CD8-positive, alpha-beta memory T cell (primary cell): ENCODE measurements at regions of chr10 and their contacts with region 1.

Region 1: DNA sequence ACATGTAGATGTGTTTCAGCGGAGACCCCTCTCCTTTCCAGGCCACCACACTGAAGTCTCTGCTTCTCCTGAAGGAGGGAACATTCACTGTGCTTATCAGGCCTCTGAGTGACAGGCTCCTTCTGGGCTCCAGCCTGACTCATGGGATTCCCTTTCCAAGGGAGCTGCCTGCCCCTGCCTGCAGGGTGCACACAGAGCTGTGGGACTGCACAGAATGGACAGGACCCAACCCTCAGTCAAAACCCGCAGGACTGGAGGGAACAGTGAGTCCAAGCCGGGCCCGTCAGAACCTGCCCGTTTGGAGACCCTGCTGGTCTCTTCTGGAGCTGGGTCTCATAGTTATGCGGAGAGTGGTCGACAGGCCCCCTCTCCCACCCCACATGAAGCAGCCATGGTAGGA is 32.6 kb downstream of the PLAC9 start:
- DNase-seq: peak in 1 of 5 donors; percentile 11
- H3K4me3 ChIP-seq: no peak overlapping the region
- H3K4me3 Mint-ChIP-seq: no peak overlapping the region
- H3K27ac ChIP-seq: no peak overlapping the region
- H3K27ac Mint-ChIP-seq: no peak overlapping the region
- H3K4me1 ChIP-seq: no peaks in the 10 kb centered on the region
- H3K4me1 Mint-ChIP-seq: peaks cover 9 to 11% (median 11%) of the 10 kb centered on the region in 3 donors
- H3K27me3 ChIP-seq: no peaks in the 10 kb centered on the region
- H3K27me3 Mint-ChIP-seq: no peaks in the 10 kb centered on the region

Region 2: GRCh38 chr10:80154975-80155695 is 10.0 kb before region 1 on chr10:
- CTCF ChIA-PET with region 1: interaction called, 10 read pairs
- POLR2A ChIA-PET with region 1: no interaction called
- DNase-seq: no peak
- H3K4me3 ChIP-seq: no peak overlapping the region
- H3K4me3 Mint-ChIP-seq: no peak overlapping the region
- H3K27ac ChIP-seq: no peak overlapping the region
- H3K27ac Mint-ChIP-seq: peak overlapping the region in 4 of 8 donors; percentile 10 to 87 (median 27)
- H3K4me1 ChIP-seq: no peaks in the 10 kb centered on the region
- H3K4me1 Mint-ChIP-seq: no peaks in the 10 kb centered on the region
- H3K27me3 ChIP-seq: no peaks in the 10 kb centered on the region
- H3K27me3 Mint-ChIP-seq: no peaks in the 10 kb centered on the region